ENCODE measurements at regions of chr2 and their contacts with region 1.

Region 1: GRCh38 chr2:86764661-86765307 is 25.9 kb downstream of the CD8A start:
- DNase-seq: no peak
- H3K4me3 ChIP-seq: no peak overlapping the region
- H3K27ac ChIP-seq: no peak overlapping the region
- H3K4me1 ChIP-seq: no peaks in the 10 kb centered on the region
- H3K27me3 ChIP-seq: no peaks in the 10 kb centered on the region
- CTCF ChIP-seq: peak in 2 of 3 experiments; percentile 56 to 57; a peak in 3 of 4 replicates
- EP300 ChIP-seq: no peak
- POLR2A ChIP-seq: no peak
- RAD21 ChIP-seq: peak; percentile 67 to 77

Region 2: DNA sequence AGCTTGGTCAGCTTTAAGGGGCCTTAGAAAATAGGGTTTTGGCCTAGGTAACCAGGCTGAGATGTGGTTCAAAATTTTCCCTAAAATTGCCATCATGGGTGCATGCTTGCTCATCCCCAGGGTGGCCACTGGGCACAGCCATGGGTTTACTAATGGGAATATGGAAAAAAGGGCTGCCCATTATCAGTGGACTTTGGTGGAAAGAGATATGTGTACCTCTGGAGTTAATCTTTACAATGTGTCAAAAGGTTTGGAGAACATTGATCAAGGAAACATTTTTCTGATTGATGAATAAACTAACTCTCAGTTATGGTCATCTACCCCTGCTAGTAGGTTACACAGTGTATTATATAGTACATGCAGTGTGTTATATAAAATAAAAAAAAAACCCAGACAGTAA is 310.5 kb before region 1 on chr2:
- CTCF ChIA-PET with region 1: no interaction called
- POLR2A ChIA-PET with region 1: no interaction called
- DNase-seq: no peak
- H3K4me3 ChIP-seq: no peak overlapping the region
- H3K27ac ChIP-seq: no peak overlapping the region
- H3K4me1 ChIP-seq: no peaks in the 10 kb centered on the region
- H3K27me3 ChIP-seq: no peaks in the 10 kb centered on the region
- CTCF ChIP-seq: no peak
- EP300 ChIP-seq: no peak
- POLR2A ChIP-seq: no peak
- RAD21 ChIP-seq: no peak

Region 3: GRCh38 chr2:86753606-86754005 is 11.2 kb before region 1 on chr2:
- CTCF ChIA-PET with region 1: interaction called, 29 read pairs
- POLR2A ChIA-PET with region 1: interaction called, 5 read pairs
- DNase-seq: no peak
- H3K4me3 ChIP-seq: no peak overlapping the region
- H3K27ac ChIP-seq: no peak overlapping the region
- H3K4me1 ChIP-seq: no peaks in the 10 kb centered on the region
- H3K27me3 ChIP-seq: no peaks in the 10 kb centered on the region
- CTCF ChIP-seq: no peak
- EP300 ChIP-seq: no peak
- POLR2A ChIP-seq: no peak
- RAD21 ChIP-seq: no peak

Region 4: DNA sequence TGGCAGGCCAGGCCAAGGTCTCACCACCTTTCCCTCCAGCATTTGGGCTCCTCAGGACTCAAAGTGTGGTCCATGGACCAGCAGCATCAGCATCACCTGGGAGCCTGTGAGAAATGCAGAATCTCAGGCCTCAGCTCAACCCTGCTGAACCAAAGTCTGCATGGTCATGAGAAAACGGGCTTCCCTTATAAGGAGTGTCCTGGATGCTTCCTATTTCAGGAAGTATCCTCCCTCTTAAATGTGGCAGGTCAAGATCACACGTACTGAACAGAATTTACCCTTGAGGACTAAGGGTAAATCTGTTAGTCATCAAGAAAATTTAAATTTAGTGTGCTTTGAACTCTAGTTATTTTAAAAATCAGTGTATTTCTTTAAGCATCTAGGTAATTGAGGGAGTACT is 14.2 kb after region 1 on chr2:
- CTCF ChIA-PET with region 1: interaction called, 13 read pairs
- POLR2A ChIA-PET with region 1: interaction called, 5 read pairs
- DNase-seq: no peak
- H3K4me3 ChIP-seq: no peak overlapping the region
- H3K27ac ChIP-seq: no peak overlapping the region
- H3K4me1 ChIP-seq: peaks cover 0 to 3% (median 0%) of the 10 kb centered on the region in 4 experiments; a peak in 1 of 7 replicates
- H3K27me3 ChIP-seq: no peaks in the 10 kb centered on the region
- CTCF ChIP-seq: no peak
- EP300 ChIP-seq: no peak
- POLR2A ChIP-seq: no peak
- RAD21 ChIP-seq: no peak